Gastrocnemius medialis (tissue), 4 donors: ENCODE measurements at regions of chr1 and their contacts with region 1.

Region 1: DNA sequence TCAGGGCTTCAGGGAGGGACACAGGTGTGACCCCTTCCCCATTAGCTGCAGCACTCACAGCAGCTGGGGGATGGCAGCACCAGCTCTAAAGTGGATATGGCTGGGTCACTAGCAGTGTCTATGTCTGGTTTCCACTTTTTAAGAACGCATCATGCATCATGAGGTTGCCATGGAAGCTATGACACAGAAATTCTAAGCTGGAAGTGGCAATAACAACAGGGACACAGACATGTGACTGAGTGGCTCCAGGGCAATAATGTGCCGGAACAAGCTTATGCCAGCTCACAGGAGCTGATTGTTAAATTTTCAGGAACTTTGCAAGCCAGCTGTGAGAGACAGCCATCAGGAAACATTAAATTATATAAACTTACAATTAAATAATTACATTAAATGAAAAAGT is 51.2 kb upstream of the NFASC start:
- DNase-seq: no peak
- ATAC-seq: no peak
- H3K4me3 ChIP-seq: no peak overlapping the region
- H3K27ac ChIP-seq: no peak overlapping the region
- H3K4me1 ChIP-seq: peaks cover 2 to 5% of the 10 kb centered on the region in 2 donors
- H3K27me3 ChIP-seq: no peaks in the 10 kb centered on the region
- CTCF ChIP-seq: no peak
- POLR2A ChIP-seq: no peak

Region 2: GRCh38 chr1:204477036-204477740 is 342.3 kb before region 1 on chr1:
- in situ Hi-C with region 1: no loop called
- intact Hi-C with region 1: no loop called
- DNase-seq: no peak
- ATAC-seq: no peak
- H3K4me3 ChIP-seq: no peak overlapping the region
- H3K27ac ChIP-seq: peak overlapping the region; percentile 0 to 41 (median 38)
- H3K4me1 ChIP-seq: peaks cover 74 to 81% of the 10 kb centered on the region in 2 donors
- H3K27me3 ChIP-seq: no peaks in the 10 kb centered on the region
- CTCF ChIP-seq: no peak
- POLR2A ChIP-seq: no peak

Region 3: GRCh38 chr1:204929487-204930154 is 110.1 kb after region 1 on chr1:
- in situ Hi-C with region 1: loop called in 1 of 4 experiments (anchors 10 kb)
- intact Hi-C with region 1: no loop called
- DNase-seq: no peak
- ATAC-seq: no peak
- H3K4me3 ChIP-seq: no peak overlapping the region
- H3K27ac ChIP-seq: no peak overlapping the region
- H3K4me1 ChIP-seq: no peaks in the 10 kb centered on the region
- H3K27me3 ChIP-seq: peaks cover 0 to 2% (median 0%) of the 10 kb centered on the region in 3 donors
- CTCF ChIP-seq: no peak
- POLR2A ChIP-seq: no peak